ENCODE measurements at regions of chr19 and their contacts with region 1.

Region 1: DNA sequence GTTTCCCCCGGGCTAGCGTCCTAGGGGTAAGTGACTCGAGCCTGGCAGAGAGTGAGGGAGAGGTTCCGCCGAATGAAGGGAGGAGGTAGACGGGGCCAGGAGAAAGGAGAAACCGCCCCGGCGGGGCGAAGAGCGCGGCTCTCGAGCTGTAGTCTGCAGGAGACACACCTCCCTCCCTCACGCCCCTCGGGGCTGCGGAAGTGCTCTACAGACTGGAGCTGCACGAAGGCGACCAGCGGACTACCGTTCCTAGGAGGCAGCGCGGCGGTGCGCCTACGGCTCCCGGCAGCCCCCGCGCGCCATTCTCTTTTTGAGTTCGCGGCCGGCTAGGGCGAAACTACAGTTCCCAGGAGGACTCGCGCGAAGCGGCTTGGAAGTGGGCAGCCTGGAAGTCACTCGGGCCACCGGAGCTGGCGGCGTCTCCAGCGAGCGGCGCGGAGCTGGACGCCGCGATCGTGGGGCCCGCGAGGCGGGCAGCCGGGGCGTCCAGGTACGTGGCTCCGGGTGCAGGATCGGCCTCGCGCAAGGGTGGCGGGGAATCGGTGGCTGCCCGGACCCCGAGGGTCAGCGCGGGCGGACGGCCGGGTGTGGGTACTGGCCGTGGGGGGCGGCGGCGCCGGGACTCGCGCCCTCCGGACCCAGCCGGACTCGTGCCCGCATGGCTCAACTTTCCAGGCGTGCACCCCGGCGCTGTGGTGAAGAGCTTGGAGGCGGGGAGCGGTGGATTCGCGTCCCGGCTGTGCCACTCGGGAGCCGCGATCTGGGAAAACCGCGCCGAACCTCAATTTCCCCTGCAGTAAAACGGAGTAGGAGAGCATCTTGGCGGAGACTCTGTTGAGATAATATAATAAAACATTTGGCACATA is at the start of gene SIPA1L3:
- DNase-seq: peak; percentile 96
- H3K4me3 Mint-ChIP-seq: peak within 1 kb of the TSS; percentile 73
- H3K27ac Mint-ChIP-seq: peak within 1 kb of the TSS; percentile 74
- H3K4me1 Mint-ChIP-seq: peaks cover 19% of the 10 kb centered on the region
- H3K27me3 Mint-ChIP-seq: no peaks in the 10 kb centered on the region
- total RNA-seq, gene SIPA1L3: 10.3 to 12.1 TPM

Region 2: DNA sequence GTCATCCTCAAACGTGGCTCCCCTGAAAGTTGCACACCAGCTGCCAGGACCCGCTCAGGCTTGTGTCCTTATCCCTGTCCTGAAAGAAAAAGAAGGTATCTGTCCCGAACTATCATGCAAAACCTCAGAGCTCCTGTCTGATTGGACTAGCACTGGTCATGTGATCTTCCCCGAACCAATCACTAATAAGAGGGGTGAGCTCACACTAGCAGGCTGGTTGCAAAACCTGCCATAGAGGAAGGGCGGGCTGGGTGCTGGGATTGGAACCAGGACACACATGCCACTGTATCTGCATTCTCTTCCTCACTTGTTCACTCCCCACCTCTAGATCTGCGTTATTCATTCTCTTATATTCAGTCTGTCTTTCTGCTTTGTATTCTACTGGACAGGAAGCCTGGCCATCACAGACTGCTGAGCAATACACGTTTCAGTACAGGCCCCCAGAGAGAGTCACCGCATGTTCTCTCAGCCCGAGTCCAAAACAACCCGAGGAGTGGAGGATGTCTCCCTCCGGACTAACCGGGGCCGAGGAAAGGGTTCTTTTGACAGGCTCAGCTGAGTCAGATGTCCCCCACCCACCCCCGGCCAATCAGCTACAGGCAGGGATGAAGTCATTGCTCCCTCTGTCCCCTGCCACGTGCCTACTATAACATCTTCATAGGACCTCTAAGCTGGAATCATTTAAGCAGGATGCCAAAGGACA is 97.6 kb after region 1 on chr19:
- CTCF ChIA-PET with region 1: interaction called, 4 read pairs
- POLR2A ChIA-PET with region 1: interaction called, 4 read pairs
- intact Hi-C with region 1: loop called (anchors 5 kb)
- DNase-seq: peak; percentile 29
- H3K4me3 Mint-ChIP-seq: no peak overlapping the region
- H3K27ac Mint-ChIP-seq: no peak overlapping the region
- H3K4me1 Mint-ChIP-seq: peaks cover 8% of the 10 kb centered on the region
- H3K27me3 Mint-ChIP-seq: no peaks in the 10 kb centered on the region

Region 3: DNA sequence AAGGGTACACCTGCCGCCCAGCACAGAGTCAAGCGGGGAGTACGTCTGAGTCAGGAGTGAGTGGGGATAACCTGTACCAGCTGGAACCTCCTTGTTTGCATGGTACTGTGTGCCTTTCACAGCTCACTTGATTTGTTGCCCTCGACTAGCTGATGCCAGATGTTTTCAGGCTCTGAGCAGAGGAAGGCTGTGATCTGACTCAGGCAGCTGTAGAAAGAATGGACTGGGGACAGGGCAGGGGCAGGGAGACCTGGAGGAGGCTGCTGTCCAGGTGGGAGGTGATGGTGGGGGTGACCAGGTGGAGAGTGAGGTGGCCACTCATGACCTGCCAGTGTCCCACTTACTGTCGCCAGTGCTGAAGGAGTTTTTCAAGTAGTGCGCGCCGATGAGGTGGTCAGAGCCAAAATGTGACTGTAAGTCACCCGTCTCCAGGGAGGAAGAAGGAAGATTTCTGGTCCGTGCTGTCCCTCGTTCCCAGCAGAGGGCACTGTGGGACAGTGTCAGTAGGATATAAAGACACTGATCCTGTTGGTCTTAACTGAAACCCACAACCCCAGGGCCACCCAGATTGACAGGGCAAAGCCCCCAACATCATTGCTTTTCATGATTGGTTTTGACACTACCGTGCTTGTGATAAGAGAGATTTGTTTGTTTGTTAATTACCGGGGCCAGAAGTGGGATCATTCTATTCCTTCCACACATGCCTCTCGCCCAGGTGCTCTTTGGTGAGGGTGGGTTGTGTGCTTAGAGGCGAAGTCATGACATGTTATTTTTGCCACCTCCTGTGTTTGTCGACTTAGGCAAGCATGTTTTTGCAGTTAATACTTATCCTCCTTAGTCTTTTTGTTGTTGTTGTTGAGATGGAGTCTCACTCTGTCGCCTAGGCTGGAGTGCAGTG is 188.6 kb after region 1 on chr19:
- CTCF ChIA-PET with region 1: interaction called, 18 read pairs
- POLR2A ChIA-PET with region 1: no interaction called
- intact Hi-C with region 1: loop called (anchors 5 kb)
- DNase-seq: peak; percentile 71
- H3K4me3 Mint-ChIP-seq: no peak overlapping the region
- H3K27ac Mint-ChIP-seq: no peak overlapping the region
- H3K4me1 Mint-ChIP-seq: no peaks in the 10 kb centered on the region
- H3K27me3 Mint-ChIP-seq: no peaks in the 10 kb centered on the region

Region 4: DNA sequence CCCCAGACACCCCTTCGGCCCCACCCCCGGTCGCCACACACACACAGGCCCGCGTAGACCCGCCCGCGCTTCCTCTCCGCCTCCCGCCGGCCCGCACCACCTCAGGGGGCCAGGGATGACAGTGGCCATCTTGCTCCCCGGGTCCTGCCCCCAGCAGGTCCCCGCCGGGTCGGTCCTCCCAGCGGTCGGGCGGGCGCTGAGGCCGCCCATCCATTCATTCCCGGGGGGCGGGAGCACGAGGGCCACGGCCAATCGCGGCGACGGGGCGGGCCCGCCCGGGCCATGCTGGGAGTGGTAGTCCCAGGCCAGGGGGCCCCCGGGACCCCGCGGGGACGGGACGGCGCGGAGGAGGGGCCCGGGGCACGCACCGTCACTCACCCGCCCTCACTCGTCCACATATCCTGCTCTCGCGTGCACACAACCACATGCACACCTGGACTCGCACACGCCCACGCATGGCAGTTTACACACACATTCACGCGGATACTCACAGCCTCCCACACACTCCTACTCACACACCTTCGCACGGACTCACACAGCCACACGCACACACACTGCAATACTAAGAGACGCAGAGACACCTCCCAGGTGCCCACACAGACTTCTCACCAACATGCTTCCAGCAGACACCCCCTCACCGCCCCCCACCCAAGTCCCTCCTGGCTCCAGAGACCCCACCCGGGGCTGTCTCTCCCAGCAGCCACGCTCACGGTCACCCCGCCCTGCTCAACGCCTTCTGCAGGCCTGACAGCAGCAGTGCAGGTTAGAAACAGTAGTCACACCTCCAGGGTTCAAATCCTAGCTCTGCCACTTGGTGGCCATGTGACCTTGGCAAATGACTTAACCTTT is 317.1 kb after region 1 on chr19 and contains the start of gene DPF1:
- CTCF ChIA-PET with region 1: interaction called, 20 read pairs
- POLR2A ChIA-PET with region 1: no interaction called
- intact Hi-C with region 1: loop called (anchors 2 kb)
- DNase-seq: peak; percentile 73
- H3K4me3 Mint-ChIP-seq: peak within 1 kb of the TSS; percentile 58
- H3K27ac Mint-ChIP-seq: no peak within 1 kb of the TSS
- H3K4me1 Mint-ChIP-seq: peaks cover 25% of the 10 kb centered on the region
- H3K27me3 Mint-ChIP-seq: peaks cover 55% of the 10 kb centered on the region
- total RNA-seq, gene DPF1: 0.75 to 1.2 TPM

Region 5: DNA sequence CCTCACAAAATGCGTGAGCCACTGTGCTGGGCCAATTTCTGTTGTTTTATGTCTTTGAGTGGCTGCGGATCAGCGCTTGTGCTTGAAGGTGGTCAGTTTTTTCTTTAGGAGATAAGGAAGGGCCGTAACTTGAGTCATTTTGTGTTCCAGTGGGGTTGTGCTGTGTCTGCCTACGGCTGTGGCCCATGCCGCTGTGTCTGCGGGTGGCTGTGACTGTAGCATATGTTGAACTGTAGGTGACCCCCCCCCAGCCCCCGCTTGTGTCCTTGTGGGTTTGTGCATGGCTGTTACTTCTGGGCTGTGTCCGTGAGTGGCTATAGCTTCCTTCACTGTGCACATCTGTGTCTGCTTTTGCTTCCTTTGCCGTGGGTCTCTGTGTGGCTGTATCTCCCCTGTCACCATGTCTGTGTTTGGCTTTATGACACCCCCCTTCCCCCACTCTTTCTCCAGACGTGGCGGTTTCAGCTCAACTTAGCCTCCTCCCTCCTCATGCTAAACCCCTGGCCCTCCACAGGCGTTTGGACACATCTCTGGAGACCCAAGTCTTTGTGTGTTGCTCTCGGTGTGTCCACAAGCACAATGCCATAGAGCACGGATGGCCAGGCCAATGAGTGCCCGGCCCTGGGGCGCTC is 348.4 kb after region 1 on chr19:
- CTCF ChIA-PET with region 1: interaction called, 12 read pairs
- POLR2A ChIA-PET with region 1: no interaction called
- intact Hi-C with region 1: no loop called
- DNase-seq: no peak
- H3K4me3 Mint-ChIP-seq: no peak overlapping the region
- H3K27ac Mint-ChIP-seq: no peak overlapping the region
- H3K4me1 Mint-ChIP-seq: peaks cover 2% of the 10 kb centered on the region
- H3K27me3 Mint-ChIP-seq: peaks cover 27% of the 10 kb centered on the region

Region 6: DNA sequence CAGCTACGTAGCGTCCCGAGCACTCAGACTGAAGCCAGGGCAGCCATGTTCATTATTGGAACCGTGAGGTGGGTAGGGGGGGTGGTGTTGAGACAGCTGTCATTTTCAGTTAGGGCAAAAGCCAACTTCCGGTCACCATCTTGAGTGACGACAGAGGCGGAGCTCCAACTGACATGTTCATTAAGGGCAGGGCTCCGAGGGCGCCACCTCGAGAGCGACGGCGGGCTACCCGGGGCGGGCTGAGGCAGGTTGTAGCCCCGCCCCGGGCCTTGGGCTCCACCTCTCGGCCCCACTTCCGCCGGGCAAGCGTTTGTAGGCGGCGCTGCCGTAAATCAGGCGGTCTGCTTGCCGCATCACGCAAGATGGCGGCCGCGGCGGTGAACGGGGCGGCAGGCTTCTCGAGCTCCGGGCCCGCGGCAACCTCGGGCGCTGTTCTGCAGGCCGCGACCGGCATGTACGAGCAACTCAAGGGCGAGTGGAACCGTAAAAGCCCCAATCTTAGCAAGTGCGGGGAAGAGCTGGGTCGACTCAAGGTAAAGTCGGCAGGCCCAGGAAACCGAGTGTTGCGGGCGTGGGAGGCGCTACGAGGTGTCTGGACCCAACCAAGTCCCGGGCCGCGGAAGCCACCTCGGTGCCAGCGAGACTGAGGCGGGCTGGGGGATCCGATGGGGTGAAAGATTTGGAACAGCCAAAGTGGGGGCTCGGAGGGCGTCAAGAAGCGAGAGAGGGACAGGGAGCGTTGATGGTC is 467.5 kb after region 1 on chr19 and contains the start of gene PSMD8:
- CTCF ChIA-PET with region 1: interaction called, 5 read pairs
- POLR2A ChIA-PET with region 1: no interaction called
- intact Hi-C with region 1: loop called (anchors 1 kb)
- DNase-seq: peak; percentile 99
- H3K4me3 Mint-ChIP-seq: peak within 1 kb of the TSS; percentile 86
- H3K27ac Mint-ChIP-seq: peak within 1 kb of the TSS; percentile 87
- H3K4me1 Mint-ChIP-seq: peaks cover 22% of the 10 kb centered on the region
- H3K27me3 Mint-ChIP-seq: no peaks in the 10 kb centered on the region
- total RNA-seq, gene PSMD8: 214 to 224 TPM

Measured in activated CD4-positive, alpha-beta memory T cell treated with anti-CD3 and anti-CD28 coated beads for 36 hours (primary cell).